Mammary epithelial cell (primary cell): ENCODE measurements at regions of chr11 and their contacts with region 1.

Region 1: GRCh38 chr11:10322830-10323792 is 18.2 kb downstream of the ADM start:
- DNase-seq: peak; percentile 84
- H3K4me3 ChIP-seq: no peak overlapping the region
- H3K27ac ChIP-seq: peak overlapping the region; percentile 57
- H3K4me1 ChIP-seq: peaks cover 6% of the 10 kb centered on the region
- H3K27me3 ChIP-seq: no peaks in the 10 kb centered on the region
- CTCF ChIP-seq: peak; percentile 42 to 49

Region 2: GRCh38 chr11:9972989-9973388 is 350.1 kb before region 1 on chr11:
- CTCF ChIA-PET with region 1: interaction called, 6 read pairs
- dilution Hi-C with region 1: no loop called
- in situ Hi-C with region 1: loop called in 1 of 2 experiments (anchors 25 kb)
- intact Hi-C with region 1: loop called (anchors 2 kb)
- DNase-seq: peak; percentile 39
- H3K4me3 ChIP-seq: no peak overlapping the region
- H3K27ac ChIP-seq: no peak overlapping the region
- H3K4me1 ChIP-seq: no peaks in the 10 kb centered on the region
- H3K27me3 ChIP-seq: no peaks in the 10 kb centered on the region
- CTCF ChIP-seq: peak; percentile 75 to 83

Region 3: GRCh38 chr11:10208131-10208575 is 115.0 kb before region 1 on chr11:
- CTCF ChIA-PET with region 1: no interaction called
- dilution Hi-C with region 1: no loop called
- in situ Hi-C with region 1: no loop called
- intact Hi-C with region 1: loop called (anchors 1 kb)
- DNase-seq: peak; percentile 44
- H3K4me3 ChIP-seq: no peak overlapping the region
- H3K27ac ChIP-seq: no peak overlapping the region
- H3K4me1 ChIP-seq: no peaks in the 10 kb centered on the region
- H3K27me3 ChIP-seq: no peaks in the 10 kb centered on the region
- CTCF ChIP-seq: peak; percentile 62 to 65